ENCODE measurements at regions of chr15 and their contacts with region 1.

Region 1: GRCh38 chr15:50463423-50464358 is 39.5 kb downstream of the USP8 start:
- DNase-seq: no peak
- ATAC-seq: no peak
- H3K4me3 Mint-ChIP-seq: no peak overlapping the region
- H3K27ac Mint-ChIP-seq: peak overlapping the region; percentile 30
- H3K4me1 Mint-ChIP-seq: peaks cover 4% of the 10 kb centered on the region
- H3K27me3 Mint-ChIP-seq: no peaks in the 10 kb centered on the region
- CTCF ChIP-seq: no peak

Region 2: GRCh38 chr15:50452927-50453326 is 10.8 kb before region 1 on chr15:
- CTCF ChIA-PET with region 1: no interaction called
- POLR2A ChIA-PET with region 1: no interaction called
- intact Hi-C with region 1: loop called (anchors 2 kb)
- DNase-seq: no peak
- ATAC-seq: no peak
- H3K4me3 Mint-ChIP-seq: no peak overlapping the region
- H3K27ac Mint-ChIP-seq: peak overlapping the region; percentile 21
- H3K4me1 Mint-ChIP-seq: peaks cover 13% of the 10 kb centered on the region
- H3K27me3 Mint-ChIP-seq: no peaks in the 10 kb centered on the region
- CTCF ChIP-seq: no peak